ENCODE measurements at regions of chr19 and their contacts with region 1.

Region 1: DNA sequence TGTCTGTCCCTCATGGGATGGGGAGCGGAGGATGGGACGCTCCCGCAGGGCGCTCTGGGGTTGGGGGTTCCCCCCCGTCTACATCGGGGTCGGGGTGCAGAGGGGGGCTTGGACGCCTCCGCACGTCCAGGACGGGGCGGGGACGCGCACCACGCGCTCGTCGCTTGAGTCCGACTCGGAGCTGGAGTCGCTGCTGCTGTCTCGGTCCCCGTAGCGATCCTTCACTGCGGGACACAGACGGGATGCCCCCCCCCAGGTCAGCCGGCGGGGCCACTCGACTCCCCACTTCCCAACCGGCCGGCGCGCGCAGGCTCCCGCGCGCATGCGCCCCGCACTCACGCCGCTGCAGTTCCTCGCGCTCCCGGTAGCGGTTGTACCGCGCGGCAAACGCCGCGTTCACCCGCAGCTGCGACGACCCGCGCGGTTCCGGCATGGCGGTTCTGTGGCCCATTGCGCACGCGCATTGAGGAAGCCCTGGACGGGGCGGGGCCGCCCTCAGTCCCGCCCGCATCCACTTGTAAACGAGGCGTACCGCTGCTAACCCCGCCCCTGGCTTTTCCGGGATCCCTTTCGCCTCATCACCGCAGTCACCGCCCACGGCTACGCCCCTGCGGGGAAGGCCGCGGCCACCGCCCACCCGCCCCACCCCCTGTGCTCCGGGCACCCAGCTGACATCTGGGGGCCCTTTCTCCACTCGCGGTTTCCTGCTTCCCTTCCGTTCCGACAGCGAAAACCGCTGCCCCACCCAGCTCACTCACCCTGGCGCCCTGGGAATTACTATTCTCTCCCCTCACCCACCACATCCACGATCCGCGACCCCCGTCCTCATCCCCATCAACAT is at the start of gene KRI1:
- DNase-seq: peak; percentile 100
- H3K4me3 Mint-ChIP-seq: peak within 1 kb of the TSS; percentile 95
- H3K27ac Mint-ChIP-seq: peak within 1 kb of the TSS; percentile 96
- H3K4me1 Mint-ChIP-seq: peaks cover 48% of the 10 kb centered on the region
- H3K27me3 Mint-ChIP-seq: no peaks in the 10 kb centered on the region
- total RNA-seq, gene KRI1: 91.1 and 91.8 TPM in 2 replicates

Region 2: DNA sequence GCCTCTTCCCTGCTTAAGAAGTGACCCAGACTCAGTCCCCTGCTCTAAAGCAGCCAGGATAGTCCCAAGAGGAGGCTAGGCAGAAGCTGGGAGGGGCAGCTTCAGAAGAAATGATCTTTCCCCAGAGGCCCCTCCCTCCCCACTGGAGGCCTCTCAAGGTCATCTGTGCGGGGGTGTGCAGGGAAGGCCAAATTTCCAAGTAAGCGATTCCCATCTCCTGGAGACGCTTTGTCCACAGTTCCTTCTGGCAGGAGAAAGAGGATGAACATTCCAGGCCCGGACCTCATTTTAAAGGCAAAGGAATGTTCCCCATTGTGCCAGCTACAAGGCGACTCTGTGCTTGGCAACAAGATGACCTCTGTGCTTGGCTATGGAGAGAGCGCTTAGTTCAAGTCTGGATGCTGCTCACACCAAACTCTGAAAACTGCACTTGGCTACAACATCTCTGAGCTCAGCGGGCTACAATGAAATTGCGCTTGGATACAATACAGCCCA is 579.0 kb before region 1 on chr19:
- intact Hi-C with region 1: no loop called
- DNase-seq: no peak
- H3K4me3 Mint-ChIP-seq: no peak overlapping the region
- H3K27ac Mint-ChIP-seq: no peak overlapping the region
- H3K4me1 Mint-ChIP-seq: no peaks in the 10 kb centered on the region
- H3K27me3 Mint-ChIP-seq: peaks cover 14% of the 10 kb centered on the region

Region 3: GRCh38 chr19:10106100-10106936 is 459.5 kb before region 1 on chr19 and contains the start of gene PPAN:
- intact Hi-C with region 1: loop called (anchors 2 kb)
- DNase-seq: peak; percentile 97
- H3K4me3 Mint-ChIP-seq: peak within 1 kb of the TSS; percentile 97
- H3K27ac Mint-ChIP-seq: peak within 1 kb of the TSS; percentile 99
- H3K4me1 Mint-ChIP-seq: peaks cover 60% of the 10 kb centered on the region
- H3K27me3 Mint-ChIP-seq: peaks cover 1% of the 10 kb centered on the region
- total RNA-seq, gene PPAN: 234 and 250 TPM in 2 replicates

Region 4: GRCh38 chr19:10403137-10404021 is 162.4 kb before region 1 on chr19 and contains the start of gene CDC37:
- intact Hi-C with region 1: loop called (anchors 1 kb)
- DNase-seq: peak; percentile 98
- H3K4me3 Mint-ChIP-seq: peak within 1 kb of the TSS; percentile 94
- H3K27ac Mint-ChIP-seq: peak within 1 kb of the TSS; percentile 96
- H3K4me1 Mint-ChIP-seq: peaks cover 51% of the 10 kb centered on the region
- H3K27me3 Mint-ChIP-seq: no peaks in the 10 kb centered on the region
- total RNA-seq, gene CDC37: 320 and 326 TPM in 2 replicates

Region 5: GRCh38 chr19:10551698-10552301 is 14.0 kb before region 1 on chr19:
- intact Hi-C with region 1: loop called (anchors 1 kb)
- DNase-seq: no peak
- H3K4me3 Mint-ChIP-seq: no peak overlapping the region
- H3K27ac Mint-ChIP-seq: peak overlapping the region; percentile 65
- H3K4me1 Mint-ChIP-seq: peaks cover 36% of the 10 kb centered on the region
- H3K27me3 Mint-ChIP-seq: no peaks in the 10 kb centered on the region

Region 6: GRCh38 chr19:10717356-10718204 is 151.8 kb after region 1 on chr19 and contains the start of gene DNM2:
- intact Hi-C with region 1: loop called (anchors 1 kb)
- DNase-seq: peak; percentile 99
- H3K4me3 Mint-ChIP-seq: peak within 1 kb of the TSS; percentile 98
- H3K27ac Mint-ChIP-seq: peak within 1 kb of the TSS; percentile 88
- H3K4me1 Mint-ChIP-seq: peaks cover 29% of the 10 kb centered on the region
- H3K27me3 Mint-ChIP-seq: no peaks in the 10 kb centered on the region
- total RNA-seq, gene DNM2: 236 and 240 TPM in 2 replicates

Region 7: GRCh38 chr19:10870955-10871603 is 305.3 kb after region 1 on chr19 and contains the start of gene CARM1:
- intact Hi-C with region 1: loop called (anchors 1 kb)
- DNase-seq: peak; percentile 98
- H3K4me3 Mint-ChIP-seq: peak within 1 kb of the TSS; percentile 88
- H3K27ac Mint-ChIP-seq: peak within 1 kb of the TSS; percentile 93
- H3K4me1 Mint-ChIP-seq: peaks cover 37% of the 10 kb centered on the region
- H3K27me3 Mint-ChIP-seq: no peaks in the 10 kb centered on the region
- total RNA-seq, gene CARM1: 85.9 and 88.0 TPM in 2 replicates

Measured in activated T-helper 1 cell treated with anti-CD3 and anti-CD28 coated beads, Interleukin-12 subunit alpha, Interleukin-12 subunit beta, Interleukin-2, Interleukin-4 antibody, amounts not matched to agents 30 ng/mL and 10 ng/mL and 1 ng/mL, durations not matched to agents 14 hours and 24 hours and 36 hours (primary cell).